HCT116 (cell line): ENCODE measurements at regions of chr17 and their contacts with region 1.

Region 1: GRCh38 chr17:37708616-37709212 is 36.1 kb downstream of the HNF1B start:
- DNase-seq: no peak
- ATAC-seq: peak; percentile 67
- H3K4me3 ChIP-seq: no peak overlapping the region
- H3K27ac ChIP-seq: no peak overlapping the region
- H3K4me1 ChIP-seq: peaks cover 7 to 18% of the 10 kb centered on the region in 2 experiments
- H3K27me3 ChIP-seq: no peaks in the 10 kb centered on the region
- CTCF ChIP-seq: no peak
- POLR2A ChIP-seq: no peak
- RAD21 ChIP-seq: no peak

Region 2: DNA sequence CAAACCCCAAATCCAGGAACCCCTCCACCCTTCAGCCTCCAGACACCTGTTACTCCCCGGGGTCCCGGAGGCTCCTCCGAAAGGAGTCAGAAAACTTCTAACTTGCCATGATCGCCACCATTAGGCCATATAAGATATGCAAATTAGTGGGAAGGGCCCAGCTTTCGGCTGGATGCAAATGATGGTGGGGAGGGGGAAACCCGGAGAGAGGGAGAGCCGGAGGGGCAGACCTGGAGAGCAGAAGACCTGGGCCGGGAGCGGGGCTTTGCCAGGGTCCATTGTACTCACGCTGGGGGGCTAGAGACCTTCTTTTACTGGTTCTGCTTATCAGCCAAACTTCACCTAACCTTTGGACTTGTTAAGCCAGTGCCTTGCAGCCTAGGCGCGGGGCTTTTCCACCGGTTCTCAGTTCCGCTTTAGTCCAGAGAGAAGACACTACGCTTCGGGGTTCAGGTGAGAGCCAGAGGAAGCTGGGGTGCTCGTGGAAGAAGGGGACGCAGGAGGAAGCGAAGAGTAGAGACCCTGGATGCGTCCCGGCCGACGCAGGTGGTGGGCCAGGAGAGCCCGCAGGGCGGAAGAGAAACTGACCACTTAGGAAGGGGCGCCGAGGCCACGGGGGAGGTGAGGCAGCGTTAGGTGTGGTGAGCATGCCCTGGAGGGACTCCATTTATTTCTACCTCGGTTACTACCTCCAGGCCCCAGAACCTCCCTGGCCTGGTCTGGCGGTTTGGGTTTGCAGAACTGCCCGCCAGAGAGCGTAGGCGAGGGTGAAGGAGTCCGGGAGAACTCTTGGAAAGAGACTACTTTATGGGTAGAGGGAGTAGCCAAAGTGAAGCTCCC is 36.5 kb after region 1 on chr17 and contains the start of gene HNF1B:
- CTCF ChIA-PET with region 1: no interaction called
- POLR2A ChIA-PET with region 1: no interaction called
- RAD21 ChIA-PET with region 1: no interaction called
- intact Hi-C with region 1: loop called (anchors 5 kb)
- DNase-seq: no peak
- ATAC-seq: peak; percentile 24; the same call in 1 of the 2 replicates
- H3K4me3 ChIP-seq: peak within 1 kb of the TSS; percentile 54 to 62
- H3K27ac ChIP-seq: peak within 1 kb of the TSS; percentile 76
- H3K4me1 ChIP-seq: peaks cover 0 to 7% of the 10 kb centered on the region in 2 experiments; a peak in 2 of 4 replicates
- H3K27me3 ChIP-seq: no peaks in the 10 kb centered on the region
- CTCF ChIP-seq: no peak
- POLR2A ChIP-seq: no peak
- RAD21 ChIP-seq: no peak
- total RNA-seq, gene HNF1B: 3.6 TPM

Region 3: GRCh38 chr17:37859451-37859850 is 150.7 kb after region 1 on chr17:
- CTCF ChIA-PET with region 1: no interaction called
- POLR2A ChIA-PET with region 1: no interaction called
- RAD21 ChIA-PET with region 1: no interaction called
- intact Hi-C with region 1: no loop called
- DNase-seq: no peak
- ATAC-seq: no peak
- H3K4me3 ChIP-seq: no peak overlapping the region
- H3K27ac ChIP-seq: no peak overlapping the region
- H3K4me1 ChIP-seq: no peaks in the 10 kb centered on the region
- H3K27me3 ChIP-seq: no peaks in the 10 kb centered on the region
- CTCF ChIP-seq: no peak
- POLR2A ChIP-seq: no peak
- RAD21 ChIP-seq: no peak